Activated naive CD4-positive, alpha-beta T cell treated with anti-CD3 and anti-CD28 coated beads for 36 hours (primary cell): ENCODE measurements at regions of chr15 and their contacts with region 1.

Region 1: GRCh38 chr15:73633111-73633990 is at the start of gene NPTN:
- DNase-seq: peak; percentile 99
- H3K4me3 Mint-ChIP-seq: peak within 1 kb of the TSS; percentile 78
- H3K27ac Mint-ChIP-seq: no peak within 1 kb of the TSS
- H3K4me1 Mint-ChIP-seq: peaks cover 52% of the 10 kb centered on the region
- H3K27me3 Mint-ChIP-seq: peaks cover 12% of the 10 kb centered on the region
- total RNA-seq, gene NPTN: 20.8 to 22.8 TPM

Region 2: GRCh38 chr15:72473614-72474465 is 1159.5 kb before region 1 on chr15 and contains the start of gene ARIH1:
- CTCF ChIA-PET with region 1: no interaction called
- intact Hi-C with region 1: loop called (anchors 10 kb)
- DNase-seq: peak; percentile 94
- H3K4me3 Mint-ChIP-seq: peak within 1 kb of the TSS; percentile 98
- H3K27ac Mint-ChIP-seq: peak within 1 kb of the TSS; percentile 98
- H3K4me1 Mint-ChIP-seq: peaks cover 34% of the 10 kb centered on the region
- H3K27me3 Mint-ChIP-seq: no peaks in the 10 kb centered on the region
- total RNA-seq, gene ARIH1: 174 to 183 TPM

Region 3: DNA sequence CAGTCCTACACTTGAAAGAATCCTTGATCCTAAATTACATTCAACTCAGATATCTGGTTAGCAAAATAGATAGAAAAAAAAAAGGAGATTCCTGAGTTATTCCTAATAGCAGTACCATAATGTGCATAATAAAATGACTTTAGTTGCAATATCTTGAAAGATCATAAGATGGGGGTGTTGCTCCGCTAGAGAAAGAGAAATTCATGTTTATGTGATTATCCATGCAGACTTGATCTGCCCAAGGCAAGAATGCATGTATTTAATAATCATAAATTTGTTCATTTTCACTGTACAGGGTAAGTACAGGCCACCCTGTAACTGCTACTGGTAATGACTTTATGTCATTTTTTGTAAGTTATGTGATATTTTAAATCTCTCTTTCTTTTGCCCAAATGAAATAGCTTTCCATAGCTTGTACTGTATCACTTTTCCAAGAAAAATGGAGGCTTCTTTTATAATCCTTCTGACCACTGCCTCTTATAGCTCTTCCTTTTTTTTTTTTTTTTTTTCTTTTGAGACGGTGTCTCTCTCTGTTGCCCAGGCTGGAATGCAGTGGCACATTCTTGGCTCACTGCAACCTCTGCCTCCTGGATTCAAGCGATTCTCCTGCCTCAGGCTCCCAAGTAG is 349.1 kb before region 1 on chr15:
- CTCF ChIA-PET with region 1: no interaction called
- intact Hi-C with region 1: loop called (anchors 2 kb)
- DNase-seq: no peak
- H3K4me3 Mint-ChIP-seq: no peak overlapping the region
- H3K27ac Mint-ChIP-seq: no peak overlapping the region
- H3K4me1 Mint-ChIP-seq: no peaks in the 10 kb centered on the region
- H3K27me3 Mint-ChIP-seq: no peaks in the 10 kb centered on the region

Region 4: GRCh38 chr15:73567022-73567592 is 66.2 kb before region 1 on chr15:
- CTCF ChIA-PET with region 1: interaction called, 53 read pairs
- intact Hi-C with region 1: no loop called
- DNase-seq: no peak
- H3K4me3 Mint-ChIP-seq: no peak overlapping the region
- H3K27ac Mint-ChIP-seq: no peak overlapping the region
- H3K4me1 Mint-ChIP-seq: peaks cover under 1% of the 10 kb centered on the region
- H3K27me3 Mint-ChIP-seq: no peaks in the 10 kb centered on the region

Region 5: GRCh38 chr15:73617301-73617831 is 16.0 kb before region 1 on chr15:
- CTCF ChIA-PET with region 1: interaction called, 26 read pairs
- intact Hi-C with region 1: no loop called
- DNase-seq: no peak
- H3K4me3 Mint-ChIP-seq: no peak overlapping the region
- H3K27ac Mint-ChIP-seq: no peak overlapping the region
- H3K4me1 Mint-ChIP-seq: peaks cover 45% of the 10 kb centered on the region
- H3K27me3 Mint-ChIP-seq: no peaks in the 10 kb centered on the region

Region 6: DNA sequence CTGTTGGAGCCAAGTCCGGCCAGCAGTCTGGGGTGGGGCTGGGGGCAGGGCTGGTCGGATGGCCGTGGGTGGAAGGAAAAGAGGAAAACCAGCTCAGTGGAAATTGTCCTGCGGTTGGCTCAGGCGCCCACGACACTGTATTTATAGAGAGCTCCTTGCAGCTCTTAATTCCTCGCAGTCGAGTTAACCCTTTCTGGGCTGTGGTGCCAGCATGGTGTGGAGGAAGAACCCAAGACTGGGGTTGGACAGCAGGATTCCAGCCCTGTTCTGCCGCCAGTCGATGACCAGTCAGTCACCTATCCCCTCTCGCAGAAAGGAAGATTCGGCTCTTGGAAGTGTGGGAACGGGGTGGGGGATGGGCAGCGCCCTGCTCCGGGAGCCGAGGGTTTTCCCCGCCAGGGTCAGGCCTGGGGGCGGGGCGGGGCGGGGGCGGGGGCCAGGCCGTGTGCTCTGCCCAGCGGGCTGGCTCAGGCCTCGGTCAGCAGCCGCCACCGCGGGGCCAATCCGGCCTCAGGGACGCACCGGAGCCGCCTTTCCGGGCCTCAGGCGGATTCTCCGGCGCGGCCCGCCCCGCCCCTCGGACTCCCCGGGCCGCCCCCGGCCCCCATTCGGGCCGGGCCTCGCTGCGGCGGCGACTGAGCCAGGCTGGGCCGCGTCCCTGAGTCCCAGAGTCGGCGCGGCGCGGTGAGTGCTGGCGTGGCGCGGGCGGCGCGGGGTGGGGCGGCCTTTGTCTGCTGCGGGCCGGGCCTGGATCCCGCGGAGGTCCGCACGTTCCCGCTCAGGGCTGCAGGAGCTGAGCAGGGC is 50.6 kb after region 1 on chr15 and contains the start of gene CD276:
- CTCF ChIA-PET with region 1: interaction called, 55 read pairs
- intact Hi-C with region 1: no loop called
- DNase-seq: no peak
- H3K4me3 Mint-ChIP-seq: peak within 1 kb of the TSS; percentile 66
- H3K27ac Mint-ChIP-seq: no peak within 1 kb of the TSS
- H3K4me1 Mint-ChIP-seq: peaks cover 18% of the 10 kb centered on the region
- H3K27me3 Mint-ChIP-seq: peaks cover 44% of the 10 kb centered on the region
- total RNA-seq, gene CD276: 1.2 to 1.3 TPM

Region 7: GRCh38 chr15:73822998-73823397 is 189.6 kb after region 1 on chr15:
- CTCF ChIA-PET with region 1: no interaction called
- intact Hi-C with region 1: no loop called
- DNase-seq: peak; percentile 18
- H3K4me3 Mint-ChIP-seq: no peak overlapping the region
- H3K27ac Mint-ChIP-seq: no peak overlapping the region
- H3K4me1 Mint-ChIP-seq: no peaks in the 10 kb centered on the region
- H3K27me3 Mint-ChIP-seq: peaks cover 6% of the 10 kb centered on the region

Region 8: GRCh38 chr15:73908030-73908821 is 274.9 kb after region 1 on chr15:
- CTCF ChIA-PET with region 1: interaction called, 3 read pairs
- intact Hi-C with region 1: loop called (anchors 5 kb)
- DNase-seq: peak; percentile 89
- H3K4me3 Mint-ChIP-seq: no peak overlapping the region
- H3K27ac Mint-ChIP-seq: no peak overlapping the region
- H3K4me1 Mint-ChIP-seq: no peaks in the 10 kb centered on the region
- H3K27me3 Mint-ChIP-seq: no peaks in the 10 kb centered on the region